Activated CD8-positive, alpha-beta T cell treated with anti-CD3 and anti-CD28 coated beads, Interleukin-2, amount 10 ng/mL, durations not matched to agents 7 days and 5 days (primary cell): ENCODE measurements at regions of chr20 and their contacts with region 1.

Region 1: GRCh38 chr20:62121776-62122631 is at the start of gene LSM14B:
- DNase-seq: peak; percentile 96
- ATAC-seq: peak; percentile 87
- H3K4me3 Mint-ChIP-seq: peak within 1 kb of the TSS; percentile 84
- H3K27ac Mint-ChIP-seq: peak within 1 kb of the TSS; percentile 97
- H3K4me1 Mint-ChIP-seq: peaks cover 49% of the 10 kb centered on the region
- H3K27me3 Mint-ChIP-seq: no peaks in the 10 kb centered on the region
- total RNA-seq, gene LSM14B: 42.4 to 42.8 TPM

Region 2: DNA sequence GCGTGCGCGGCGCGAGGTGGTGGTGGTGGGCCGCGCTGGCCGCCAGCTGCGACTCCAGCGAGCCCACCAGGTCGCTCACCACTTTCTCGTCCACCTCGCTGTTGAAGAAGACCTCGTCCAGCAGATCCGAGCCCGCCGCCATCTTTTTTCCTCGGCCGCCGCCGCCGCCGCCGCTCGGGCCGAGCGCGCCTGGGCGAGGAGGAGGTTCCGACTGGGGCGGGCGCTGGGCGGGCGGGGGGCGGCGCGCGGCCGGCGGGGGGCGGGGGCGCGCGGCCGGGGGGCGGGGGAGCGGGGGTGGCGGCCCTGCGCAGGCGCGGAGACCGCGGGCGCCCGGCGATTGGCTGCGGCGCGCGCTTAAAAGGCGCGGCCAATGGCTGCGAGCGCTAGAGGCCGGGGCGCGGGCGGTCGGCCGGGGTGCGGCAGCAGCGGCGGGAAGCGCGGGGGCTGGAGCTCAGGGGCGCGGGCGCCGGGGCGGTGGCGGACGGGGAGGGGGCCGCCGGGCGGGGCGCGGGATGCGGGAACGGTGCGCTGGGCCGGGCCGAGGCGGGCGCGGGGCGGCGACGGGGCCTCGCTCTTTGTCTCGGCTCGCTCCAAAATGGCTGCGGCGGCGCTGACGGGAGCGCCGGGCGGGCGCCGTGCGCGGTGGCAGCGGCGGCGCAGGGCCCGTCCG is 56.2 kb before region 1 on chr20 and contains the start of gene TAF4:
- CTCF ChIA-PET with region 1: interaction called, 3 read pairs
- POLR2A ChIA-PET with region 1: interaction called, 18 read pairs
- DNase-seq: peak; percentile 78
- ATAC-seq: peak; percentile 83
- H3K4me3 Mint-ChIP-seq: peak within 1 kb of the TSS; percentile 81
- H3K27ac Mint-ChIP-seq: peak within 1 kb of the TSS; percentile 86
- H3K4me1 Mint-ChIP-seq: peaks cover 36% of the 10 kb centered on the region
- H3K27me3 Mint-ChIP-seq: peaks cover 3% of the 10 kb centered on the region
- total RNA-seq, gene TAF4: 24.0 to 24.1 TPM